GM12878 (cell line): ENCODE measurements at regions of chr11 and their contacts with region 1.

Region 1: GRCh38 chr11:29328961-29329441 is 687.8 kb downstream of the KCNA4 start:
- DNase-seq: no peak
- ATAC-seq: peak; percentile 76
- H3K4me3 ChIP-seq: no peak overlapping the region
- H3K27ac ChIP-seq: no peak overlapping the region
- H3K4me1 ChIP-seq: no peaks in the 10 kb centered on the region
- H3K27me3 ChIP-seq: no peaks in the 10 kb centered on the region
- CTCF ChIP-seq: peak; percentile 41 to 61 (median 59); a peak in 5 of 6 replicates
- EP300 ChIP-seq: no peak
- POLR2A ChIP-seq: no peak
- RAD21 ChIP-seq: peak; percentile 74

Region 2: GRCh38 chr11:29159552-29160465 is 169.2 kb before region 1 on chr11:
- CTCF ChIA-PET with region 1: interaction called, 86 read pairs
- POLR2A ChIA-PET with region 1: interaction called, 5 read pairs
- RAD21 ChIA-PET with region 1: interaction called, 25 read pairs
- SMC1A ChIA-PET with region 1: interaction called, 47 read pairs
- in situ Hi-C with region 1: no loop called
- intact Hi-C with region 1: loop called (anchors 2 kb)
- DNase-seq: no peak
- ATAC-seq: peak; percentile 98
- H3K4me3 ChIP-seq: no peak overlapping the region
- H3K27ac ChIP-seq: no peak overlapping the region
- H3K4me1 ChIP-seq: no peaks in the 10 kb centered on the region
- H3K27me3 ChIP-seq: no peaks in the 10 kb centered on the region
- CTCF ChIP-seq: peak; percentile 38 to 64 (median 52); a peak in 5 of 6 replicates
- EP300 ChIP-seq: no peak
- POLR2A ChIP-seq: no peak
- RAD21 ChIP-seq: peak; percentile 72

Region 3: DNA sequence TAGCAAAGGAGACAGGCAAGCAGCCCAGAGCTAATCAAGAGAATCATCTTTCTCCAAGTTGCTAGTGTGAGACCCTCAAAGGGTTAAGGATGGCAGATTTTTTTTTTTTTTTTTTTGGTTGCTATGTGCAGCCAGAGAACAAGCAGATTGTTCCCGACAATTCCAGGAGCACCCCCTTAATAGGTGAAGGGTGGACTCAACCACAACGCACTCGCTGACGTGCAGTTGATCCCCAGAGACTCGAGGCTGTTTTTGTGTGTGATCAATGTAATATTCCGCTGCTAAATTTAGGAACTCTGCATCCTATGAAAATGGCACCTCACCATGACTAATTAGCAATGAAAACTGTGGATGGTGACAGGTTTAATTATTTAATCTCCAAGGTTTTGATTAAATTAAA is 101.2 kb before region 1 on chr11:
- CTCF ChIA-PET with region 1: interaction called, 5 read pairs
- POLR2A ChIA-PET with region 1: no interaction called
- RAD21 ChIA-PET with region 1: no interaction called
- SMC1A ChIA-PET with region 1: interaction called, 10 read pairs
- in situ Hi-C with region 1: no loop called
- intact Hi-C with region 1: no loop called
- DNase-seq: no peak
- ATAC-seq: no peak
- H3K4me3 ChIP-seq: no peak overlapping the region
- H3K27ac ChIP-seq: no peak overlapping the region
- H3K4me1 ChIP-seq: no peaks in the 10 kb centered on the region
- H3K27me3 ChIP-seq: no peaks in the 10 kb centered on the region
- CTCF ChIP-seq: no peak
- EP300 ChIP-seq: no peak
- POLR2A ChIP-seq: no peak
- RAD21 ChIP-seq: no peak

Region 4: DNA sequence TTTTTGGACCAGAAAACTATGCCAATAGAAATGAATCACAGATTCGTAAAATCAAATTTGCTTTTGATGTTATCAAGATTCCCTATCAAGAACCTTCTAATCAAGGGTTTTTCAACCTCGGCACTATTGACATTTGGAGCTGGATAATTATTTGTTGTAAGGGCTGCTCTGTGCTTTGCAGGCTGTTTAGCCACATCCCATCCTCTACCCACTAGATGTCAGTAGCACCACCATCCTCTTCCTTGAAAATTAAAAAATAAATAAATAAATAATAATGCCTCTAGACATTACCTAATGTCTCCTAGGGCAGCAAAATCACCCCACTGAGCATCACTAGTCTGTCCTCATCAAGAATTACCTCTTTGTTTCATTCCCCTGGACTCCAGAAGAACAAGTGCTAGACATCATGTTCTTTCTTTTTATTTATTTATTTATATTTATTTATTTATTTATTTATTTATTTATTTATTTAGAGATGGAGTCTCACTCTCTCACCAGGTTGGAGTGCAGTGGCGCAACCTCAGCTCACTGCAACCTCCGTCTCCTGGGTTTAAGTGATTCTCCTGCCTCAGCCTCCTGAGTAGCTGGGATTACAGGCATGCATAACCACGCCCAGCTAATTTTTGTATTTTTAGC is 56.9 kb before region 1 on chr11:
- CTCF ChIA-PET with region 1: interaction called, 85 read pairs
- POLR2A ChIA-PET with region 1: no interaction called
- RAD21 ChIA-PET with region 1: interaction called, 21 read pairs
- SMC1A ChIA-PET with region 1: interaction called, 65 read pairs
- in situ Hi-C with region 1: no loop called
- intact Hi-C with region 1: loop called (anchors 5 kb)
- DNase-seq: no peak
- ATAC-seq: peak; percentile 75
- H3K4me3 ChIP-seq: no peak overlapping the region
- H3K27ac ChIP-seq: no peak overlapping the region
- H3K4me1 ChIP-seq: no peaks in the 10 kb centered on the region
- H3K27me3 ChIP-seq: no peaks in the 10 kb centered on the region
- CTCF ChIP-seq: peak in 2 of 3 experiments; percentile 9 to 31; a peak in 1 of 6 replicates
- EP300 ChIP-seq: no peak
- POLR2A ChIP-seq: no peak
- RAD21 ChIP-seq: 0 out of 2 replicates have a peak, but pooled peaks have one; percentile 17

Region 5: GRCh38 chr11:29306527-29306926 is 22.5 kb before region 1 on chr11:
- CTCF ChIA-PET with region 1: interaction called, 24 read pairs
- POLR2A ChIA-PET with region 1: no interaction called
- RAD21 ChIA-PET with region 1: interaction called, 8 read pairs
- SMC1A ChIA-PET with region 1: interaction called, 10 read pairs
- in situ Hi-C with region 1: no loop called
- intact Hi-C with region 1: no loop called
- DNase-seq: no peak
- ATAC-seq: no peak
- H3K4me3 ChIP-seq: no peak overlapping the region
- H3K27ac ChIP-seq: no peak overlapping the region
- H3K4me1 ChIP-seq: no peaks in the 10 kb centered on the region
- H3K27me3 ChIP-seq: no peaks in the 10 kb centered on the region
- CTCF ChIP-seq: no peak
- EP300 ChIP-seq: no peak
- POLR2A ChIP-seq: no peak
- RAD21 ChIP-seq: no peak